Ascending aorta (tissue), 2 donors: ENCODE measurements at regions of chr14 and their contacts with region 1.

Region 1: GRCh38 chr14:105414456-105415371 is 4.9 kb upstream of the MTA1 start:
- DNase-seq: peak; percentile 27 to 85
- H3K4me3 ChIP-seq: peak overlapping the region; percentile 55 to 71
- H3K27ac ChIP-seq: peak overlapping the region; percentile 36 to 62
- H3K4me1 ChIP-seq: peaks cover 0 to 18% of the 10 kb centered on the region in 2 donors
- H3K27me3 ChIP-seq: no peaks in the 10 kb centered on the region
- CTCF ChIP-seq: peak; percentile 49 to 80 (median 69)

Region 2: GRCh38 chr14:105248368-105248756 is 166.4 kb before region 1 on chr14 and contains the start of gene BTBD6:
- intact Hi-C with region 1: loop called (anchors 10 kb)
- DNase-seq: peak; percentile 37 to 91
- H3K4me3 ChIP-seq: peak within 1 kb of the TSS; percentile 72
- H3K27ac ChIP-seq: peak within 1 kb of the TSS; percentile 84 to 88
- H3K4me1 ChIP-seq: peaks cover 4 to 17% of the 10 kb centered on the region in 2 donors
- H3K27me3 ChIP-seq: no peaks in the 10 kb centered on the region
- CTCF ChIP-seq: no peak
- total RNA-seq, gene BTBD6: 80.1 TPM

Region 3: GRCh38 chr14:105258846-105259245 is 155.9 kb before region 1 on chr14:
- intact Hi-C with region 1: no loop called
- DNase-seq: no peak
- H3K4me3 ChIP-seq: no peak overlapping the region
- H3K27ac ChIP-seq: no peak overlapping the region
- H3K4me1 ChIP-seq: no peaks in the 10 kb centered on the region
- H3K27me3 ChIP-seq: no peaks in the 10 kb centered on the region
- CTCF ChIP-seq: no peak

Region 4: GRCh38 chr14:105398044-105398725 is 16.5 kb before region 1 on chr14 and contains the start of gene TEX22:
- intact Hi-C with region 1: loop called (anchors 2 kb)
- DNase-seq: peak in 1 of 2 donors; percentile 92
- H3K4me3 ChIP-seq: peak within 1 kb of the TSS; percentile 80 to 90
- H3K27ac ChIP-seq: peak within 1 kb of the TSS; percentile 71 to 77
- H3K4me1 ChIP-seq: peaks cover 8% of the 10 kb centered on the region in 2 donors
- H3K27me3 ChIP-seq: no peaks in the 10 kb centered on the region
- CTCF ChIP-seq: peak in 1 of 3 experiments; percentile 15
- total RNA-seq, gene TEX22: not detected

Region 5: DNA sequence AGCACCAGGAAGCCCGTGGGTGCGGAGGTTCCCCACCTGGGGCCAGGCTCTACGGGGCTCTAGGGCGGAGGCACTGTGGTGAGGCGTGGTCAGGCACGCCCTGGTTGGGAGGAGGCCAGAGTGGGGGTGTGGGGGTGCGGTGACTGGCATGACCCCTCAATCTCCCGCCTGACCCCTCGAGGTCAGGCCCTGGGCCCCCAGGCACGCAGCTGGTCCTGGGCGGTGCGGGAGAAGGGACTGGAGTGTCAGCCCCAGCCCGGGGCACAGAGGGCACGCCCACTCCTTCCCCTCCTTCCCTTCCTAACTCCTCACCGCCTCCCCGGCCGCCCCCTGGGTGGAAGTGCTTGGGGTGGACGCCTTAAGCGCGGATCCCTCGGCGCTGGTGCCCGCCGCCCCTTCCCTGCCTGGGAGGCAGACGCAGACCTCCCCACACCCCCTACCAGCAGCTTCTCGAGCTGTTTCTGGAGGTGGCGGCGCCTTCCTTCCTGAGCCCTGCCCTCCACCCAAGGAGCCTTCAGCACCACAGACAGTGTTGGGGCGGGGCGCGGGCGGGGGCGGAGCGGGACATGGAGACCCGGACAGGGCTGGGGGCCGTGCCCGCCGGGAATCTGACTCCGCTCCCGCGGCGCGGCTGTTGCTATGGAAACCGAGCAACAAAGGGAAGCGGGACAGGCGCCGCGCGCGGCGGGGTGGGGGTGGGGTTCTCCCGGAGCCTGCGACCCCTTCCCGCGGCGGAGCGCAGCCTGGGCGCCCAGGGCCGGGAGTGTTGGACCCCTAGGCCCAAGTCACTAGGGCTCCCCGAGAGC is 59.2 kb after region 1 on chr14:
- intact Hi-C with region 1: loop called (anchors 2 kb)
- DNase-seq: peak; percentile 87 to 98
- H3K4me3 ChIP-seq: peak overlapping the region; percentile 65 to 78
- H3K27ac ChIP-seq: peak overlapping the region; percentile 86 to 96
- H3K4me1 ChIP-seq: peaks cover 21 to 45% of the 10 kb centered on the region in 2 donors
- H3K27me3 ChIP-seq: no peaks in the 10 kb centered on the region
- CTCF ChIP-seq: no peak

Region 6: DNA sequence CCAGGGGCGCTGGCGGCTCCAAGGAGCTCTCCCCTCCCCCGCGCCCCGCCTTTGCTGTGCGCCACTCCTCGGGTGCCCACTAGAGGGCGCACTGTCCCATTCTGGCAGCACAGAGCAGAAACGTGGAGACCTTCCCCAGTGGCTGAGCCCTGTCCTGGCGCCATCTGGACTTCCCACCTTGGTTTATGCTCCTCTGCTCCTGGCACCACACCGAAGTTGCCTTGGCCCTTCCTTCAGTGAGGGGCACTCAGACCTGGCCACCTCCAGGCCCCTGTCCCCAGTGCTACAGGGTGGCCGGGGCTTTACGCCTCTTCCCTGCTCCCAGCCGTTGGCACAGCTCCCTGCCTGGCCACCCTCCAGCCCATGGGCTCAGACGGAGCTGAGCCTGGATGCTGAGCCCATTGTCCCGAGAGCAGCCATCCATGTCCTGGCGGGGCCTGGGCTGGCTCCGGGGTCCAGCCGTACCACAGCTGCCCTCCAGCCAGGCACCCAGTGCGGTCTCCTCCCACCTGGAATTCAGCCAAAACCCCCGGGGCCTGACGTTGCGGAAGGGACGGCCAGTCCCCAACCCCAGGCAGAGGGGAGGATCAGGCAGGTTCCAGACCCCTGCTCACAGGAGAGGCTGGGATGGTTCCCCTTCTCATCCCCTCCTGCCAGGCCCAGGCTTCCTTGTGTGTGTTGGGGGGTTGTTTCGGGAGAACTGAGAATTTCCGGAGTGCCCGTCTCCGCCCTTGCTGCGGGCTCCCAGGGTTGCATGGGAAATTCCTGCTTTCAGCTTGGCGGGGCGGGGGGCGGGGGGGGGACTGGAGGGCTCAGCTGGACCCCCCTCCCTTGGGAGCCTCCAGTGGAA is 66.5 kb after region 1 on chr14:
- intact Hi-C with region 1: loop called (anchors 2 kb)
- DNase-seq: peak; percentile 74 to 97
- H3K4me3 ChIP-seq: peak overlapping the region; percentile 55 to 58
- H3K27ac ChIP-seq: peak overlapping the region; percentile 89 to 99
- H3K4me1 ChIP-seq: peaks cover 32 to 65% of the 10 kb centered on the region in 2 donors
- H3K27me3 ChIP-seq: no peaks in the 10 kb centered on the region
- CTCF ChIP-seq: peak; percentile 98 to 99 (median 99)